ACHN (cell line): ENCODE measurements at regions of chr12 and their contacts with region 1.

Region 1: DNA sequence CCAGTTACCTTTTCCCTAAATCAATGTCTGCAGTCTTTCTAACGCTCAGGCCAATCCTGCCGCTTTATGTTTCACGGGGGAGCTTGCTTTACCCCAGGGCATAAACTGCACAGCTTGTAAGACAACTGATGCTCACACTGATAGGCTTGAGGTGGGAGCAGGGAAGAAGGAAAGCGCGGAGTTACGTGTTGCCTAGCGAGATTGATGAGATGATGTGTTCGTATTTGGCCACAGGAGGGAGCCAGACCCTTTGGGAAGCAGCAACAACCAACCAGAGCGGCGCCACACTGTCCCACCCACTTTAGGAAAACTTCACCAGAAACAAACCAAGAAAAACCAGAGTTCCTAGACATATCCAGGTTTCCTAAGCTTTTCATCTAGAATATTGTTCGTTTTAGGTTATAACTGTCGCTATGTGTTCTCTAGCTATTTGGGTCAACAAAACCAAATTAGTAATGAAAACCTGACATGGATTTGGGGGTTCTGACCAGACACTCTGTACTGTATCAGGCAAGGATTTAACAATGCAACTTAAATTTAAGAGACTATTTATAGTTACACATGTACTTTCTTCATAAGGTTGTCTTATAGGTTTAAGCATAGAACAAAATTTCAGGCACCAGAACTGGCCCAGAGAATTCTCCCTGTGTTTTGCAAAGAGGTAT is 2.4 kb downstream of the IL26 start:
- DNase-seq: peak; percentile 88

Region 2: DNA sequence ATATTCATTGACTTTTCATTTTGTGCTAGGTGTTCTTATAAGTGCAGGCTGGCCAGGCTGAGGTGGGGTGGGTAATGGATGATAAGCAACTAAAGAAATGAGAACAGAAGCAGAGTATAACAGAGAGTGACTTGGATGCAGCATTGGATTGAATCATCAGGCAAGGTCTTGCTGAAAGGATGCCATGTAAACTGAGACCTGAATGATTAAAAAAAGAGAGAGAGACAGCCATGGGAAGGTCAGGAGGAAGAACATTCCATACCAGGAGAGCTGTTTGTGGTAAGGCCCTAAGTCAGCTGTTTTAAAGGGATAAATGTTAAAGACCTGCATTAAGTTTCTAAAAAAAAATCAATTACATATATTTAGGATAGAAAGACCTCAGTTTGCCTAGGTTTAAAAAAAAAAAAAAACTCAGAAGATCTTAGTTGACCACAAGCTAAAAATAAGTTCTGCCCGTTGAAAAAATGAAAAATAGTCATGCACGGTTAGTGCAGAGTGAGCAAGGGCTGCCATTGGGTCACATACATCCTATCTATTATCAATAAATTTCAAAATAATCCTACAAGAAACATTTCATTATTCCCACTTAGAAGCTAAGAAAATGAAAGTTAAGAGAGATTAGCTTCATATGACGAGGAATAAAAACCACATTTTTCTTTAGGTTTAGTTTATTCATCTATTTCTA is 100.8 kb before region 1 on chr12:
- in situ Hi-C with region 1: no loop called
- DNase-seq: no peak

Region 3: GRCh38 chr12:68317047-68317667 is 93.9 kb after region 1 on chr12:
- in situ Hi-C with region 1: loop called (anchors 25 kb)
- DNase-seq: peak; percentile 68